Left ventricle myocardium inferior (tissue), 1 donor: ENCODE measurements at regions of chr1 and their contacts with region 1.

Region 1: DNA sequence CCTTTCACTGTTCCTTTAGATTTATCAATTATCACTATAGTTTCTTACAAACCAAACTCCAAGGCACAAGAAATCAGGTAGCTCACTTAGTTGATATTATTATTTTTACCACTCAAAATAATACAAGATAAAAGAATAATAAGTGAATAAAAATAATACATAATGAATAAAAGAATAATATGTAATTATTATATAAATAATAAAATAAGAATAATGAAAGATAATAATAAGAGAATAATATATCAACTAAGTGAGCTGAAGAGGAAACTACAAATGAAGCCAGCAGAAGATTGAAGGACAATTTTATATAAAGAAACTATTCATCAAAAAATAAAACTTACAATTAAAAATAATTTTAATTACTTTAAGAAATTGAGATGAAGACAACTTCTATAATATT is 90.6 kb downstream of the LRRIQ3 start:
- DNase-seq: no peak
- H3K4me3 ChIP-seq: no peak overlapping the region
- H3K27ac ChIP-seq: no peak overlapping the region
- H3K4me1 ChIP-seq: no peaks in the 10 kb centered on the region
- H3K27me3 ChIP-seq: no peaks in the 10 kb centered on the region
- CTCF ChIP-seq: no peak

Region 2: DNA sequence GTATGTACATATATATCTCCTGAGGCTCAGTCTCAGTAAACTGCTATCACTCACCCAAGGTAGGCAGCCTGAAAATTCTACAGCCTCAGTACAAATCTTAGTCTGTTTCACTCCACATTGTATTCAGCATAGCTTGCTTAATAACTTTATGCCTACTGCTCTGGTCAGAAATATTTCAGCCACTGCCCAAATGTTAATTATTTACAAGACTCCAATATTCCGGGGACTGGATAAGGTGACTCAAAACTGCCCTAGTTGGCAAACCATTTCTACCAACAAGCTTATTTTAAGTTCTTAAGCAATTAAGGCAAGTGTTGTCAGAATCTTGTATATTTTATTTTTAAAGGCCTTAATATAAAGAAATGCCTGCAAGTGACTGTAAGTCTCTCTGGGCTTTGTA is 24.3 kb before region 1 on chr1:
- intact Hi-C with region 1: loop called (anchors 1 kb)
- DNase-seq: no peak
- H3K4me3 ChIP-seq: no peak overlapping the region
- H3K27ac ChIP-seq: no peak overlapping the region
- H3K4me1 ChIP-seq: no peaks in the 10 kb centered on the region
- H3K27me3 ChIP-seq: no peaks in the 10 kb centered on the region
- CTCF ChIP-seq: no peak